PC-9 (cell line): ENCODE measurements at regions of chr12 and their contacts with region 1.

Region 1: DNA sequence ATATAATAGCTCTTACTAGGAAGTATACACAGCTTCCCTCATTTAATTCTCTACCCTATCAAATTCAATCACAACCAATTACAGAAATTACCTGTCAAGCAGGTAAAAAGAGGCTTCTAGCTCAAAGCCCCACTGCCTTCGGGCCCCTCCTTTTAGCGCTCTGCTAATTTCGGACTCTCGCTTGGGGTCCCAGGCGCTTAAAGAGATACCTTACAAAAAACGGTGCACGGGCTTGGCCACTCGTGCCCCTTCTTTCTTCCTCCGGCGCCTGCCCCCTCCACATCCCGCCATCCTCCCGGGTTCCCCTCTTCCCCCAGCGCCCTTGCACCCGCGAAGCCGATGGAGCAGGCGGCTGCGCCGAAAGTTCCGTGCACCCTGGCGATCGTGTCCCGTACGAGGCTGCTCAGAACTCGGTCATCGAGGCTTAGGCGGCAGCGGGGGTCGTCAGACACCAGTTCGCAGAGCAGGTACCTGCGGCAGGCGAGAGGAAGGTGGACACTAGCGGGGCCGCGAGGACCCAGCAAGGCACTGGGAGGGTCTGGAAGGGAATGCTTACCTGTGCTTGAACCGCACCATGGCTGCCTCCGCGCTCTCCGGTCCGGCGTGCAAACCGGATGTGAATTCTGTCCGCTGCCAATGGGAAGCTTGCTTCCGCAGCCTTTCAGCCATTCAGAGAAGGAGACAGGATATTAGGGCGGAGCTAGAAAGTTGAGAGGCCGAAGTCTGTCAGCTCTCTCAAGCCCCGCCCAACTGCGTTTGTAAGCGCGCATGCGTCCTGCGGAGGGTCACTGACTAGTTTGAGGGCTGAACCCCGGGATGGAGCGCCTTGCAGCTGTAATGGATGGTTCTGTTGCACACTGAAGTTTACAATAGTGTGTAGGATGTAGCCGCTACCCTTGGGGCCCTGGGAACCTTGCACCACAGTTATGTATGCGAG is at the start of gene POP5:
- DNase-seq: peak; percentile 94 to 96
- H3K4me3 ChIP-seq: peak within 1 kb of the TSS; percentile 98
- H3K27ac ChIP-seq: no peak within 1 kb of the TSS
- H3K4me1 ChIP-seq: 0 out of 2 replicates have a peak, but pooled peaks cover 19% of the 10 kb centered on the region
- H3K27me3 ChIP-seq: no peaks in the 10 kb centered on the region
- CTCF ChIP-seq: no peak
- total RNA-seq, gene POP5: 26.5 and 30.5 TPM in 2 replicates

Region 2: DNA sequence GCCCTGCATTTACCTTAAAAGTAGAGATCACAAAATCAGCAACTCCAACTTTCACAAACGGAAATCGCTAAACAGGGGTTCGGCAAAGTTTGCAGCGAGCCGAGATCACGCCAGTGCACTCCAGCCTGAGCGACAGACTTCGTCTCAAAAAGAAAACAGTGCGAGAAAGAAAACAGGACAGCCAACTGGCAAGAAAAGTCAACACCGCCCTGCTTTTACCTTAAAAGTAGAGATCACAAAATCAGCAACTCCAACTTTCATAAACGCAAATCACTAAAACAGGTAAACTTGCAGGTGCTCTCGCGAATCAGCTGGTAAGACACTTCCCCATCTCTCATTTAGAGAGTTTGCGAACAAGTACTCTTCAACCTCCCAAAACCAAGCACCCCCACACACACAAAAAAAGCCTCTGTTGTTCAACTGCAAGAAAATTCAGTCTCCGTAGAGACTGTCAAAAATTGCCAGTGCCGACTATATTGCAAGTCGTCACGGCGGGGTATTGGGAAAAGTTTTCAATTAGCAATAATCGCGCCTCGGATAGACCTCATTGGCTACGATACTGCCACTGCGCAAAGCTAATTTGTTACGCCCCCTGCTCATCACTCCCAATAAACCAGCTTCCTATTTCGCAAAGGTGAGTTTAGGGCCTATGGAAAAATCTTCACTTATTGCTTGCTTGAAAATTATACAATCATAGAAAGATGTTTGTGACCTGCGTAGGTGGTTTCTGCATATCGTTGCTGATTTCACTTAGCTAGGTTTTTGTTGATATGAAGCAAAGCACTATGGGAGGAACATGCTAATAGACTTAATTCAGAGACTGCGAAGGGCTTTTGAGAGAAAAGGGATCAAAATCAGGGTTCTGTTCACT is 288.2 kb before region 1 on chr12 and contains the start of gene RNU4-1:
- CTCF ChIA-PET with region 1: no interaction called
- POLR2A ChIA-PET with region 1: interaction called, 11 read pairs
- intact Hi-C with region 1: no loop called
- DNase-seq: peak; percentile 81 to 97
- H3K4me3 ChIP-seq: peak within 1 kb of the TSS; percentile 64
- H3K27ac ChIP-seq: peak within 1 kb of the TSS; percentile 99
- H3K4me1 ChIP-seq: peaks cover 19% of the 10 kb centered on the region
- H3K27me3 ChIP-seq: no peaks in the 10 kb centered on the region
- CTCF ChIP-seq: no peak
- total RNA-seq, gene RNU4-1: 1,857 and 3,341 TPM in 2 replicates

Region 3: GRCh38 chr12:120437754-120438494 is 143.1 kb before region 1 on chr12 and contains the start of gene COX6A1:
- CTCF ChIA-PET with region 1: no interaction called
- POLR2A ChIA-PET with region 1: no interaction called
- intact Hi-C with region 1: loop called (anchors 5 kb)
- DNase-seq: peak; percentile 96 to 97
- H3K4me3 ChIP-seq: peak within 1 kb of the TSS; percentile 67
- H3K27ac ChIP-seq: peak within 1 kb of the TSS; percentile 49
- H3K4me1 ChIP-seq: peaks cover 12% of the 10 kb centered on the region
- H3K27me3 ChIP-seq: no peaks in the 10 kb centered on the region
- CTCF ChIP-seq: no peak
- total RNA-seq, gene COX6A1: 433 and 556 TPM in 2 replicates

Region 4: GRCh38 chr12:120686690-120687577 is 105.9 kb after region 1 on chr12 and contains the start of gene MLEC:
- CTCF ChIA-PET with region 1: no interaction called
- POLR2A ChIA-PET with region 1: interaction called, 3 read pairs
- intact Hi-C with region 1: loop called (anchors 2 kb)
- DNase-seq: peak; percentile 88 to 98
- H3K4me3 ChIP-seq: peak within 1 kb of the TSS; percentile 82
- H3K27ac ChIP-seq: peak within 1 kb of the TSS; percentile 77
- H3K4me1 ChIP-seq: peaks cover 29% of the 10 kb centered on the region
- H3K27me3 ChIP-seq: no peaks in the 10 kb centered on the region
- CTCF ChIP-seq: no peak
- total RNA-seq, gene MLEC: 110 and 131 TPM in 2 replicates

Region 5: GRCh38 chr12:121005346-121005815 is 424.3 kb after region 1 on chr12:
- CTCF ChIA-PET with region 1: interaction called, 4 read pairs
- POLR2A ChIA-PET with region 1: no interaction called
- intact Hi-C with region 1: loop called (anchors 2 kb)
- DNase-seq: peak; percentile 58 to 60
- H3K4me3 ChIP-seq: no peak overlapping the region
- H3K27ac ChIP-seq: no peak overlapping the region
- H3K4me1 ChIP-seq: no peaks in the 10 kb centered on the region
- H3K27me3 ChIP-seq: no peaks in the 10 kb centered on the region
- CTCF ChIP-seq: peak; percentile 75

Region 6: GRCh38 chr12:121110211-121110940 is 529.3 kb after region 1 on chr12:
- CTCF ChIA-PET with region 1: no interaction called
- POLR2A ChIA-PET with region 1: no interaction called
- intact Hi-C with region 1: loop called (anchors 5 kb)
- DNase-seq: peak; percentile 38 to 52
- H3K4me3 ChIP-seq: no peak overlapping the region
- H3K27ac ChIP-seq: no peak overlapping the region
- H3K4me1 ChIP-seq: peaks cover 7% of the 10 kb centered on the region
- H3K27me3 ChIP-seq: no peaks in the 10 kb centered on the region
- CTCF ChIP-seq: peak; percentile 97